Right ventricle myocardium superior (tissue), 1 donor: ENCODE measurements at regions of chr15 and their contacts with region 1.

Region 1: DNA sequence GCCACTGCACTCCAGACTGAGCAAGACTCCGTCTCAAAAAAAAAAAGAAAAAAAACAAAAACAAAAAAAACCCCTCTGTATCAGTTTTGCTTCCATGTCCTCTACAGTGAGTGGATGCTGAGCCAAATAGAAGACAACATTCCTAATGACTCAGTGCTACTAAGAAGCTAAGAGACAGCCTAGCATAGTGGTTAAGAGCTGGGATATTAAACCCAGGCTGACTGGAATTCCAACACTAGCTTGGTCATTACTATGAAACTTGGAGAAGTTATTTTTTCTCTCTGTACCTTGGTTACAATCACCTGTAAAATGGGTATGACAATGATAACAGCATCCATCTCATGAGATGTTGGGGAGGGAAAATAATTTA is 60.9 kb upstream of the PYGO1 start:
- DNase-seq: no peak
- ATAC-seq: no peak

Region 2: DNA sequence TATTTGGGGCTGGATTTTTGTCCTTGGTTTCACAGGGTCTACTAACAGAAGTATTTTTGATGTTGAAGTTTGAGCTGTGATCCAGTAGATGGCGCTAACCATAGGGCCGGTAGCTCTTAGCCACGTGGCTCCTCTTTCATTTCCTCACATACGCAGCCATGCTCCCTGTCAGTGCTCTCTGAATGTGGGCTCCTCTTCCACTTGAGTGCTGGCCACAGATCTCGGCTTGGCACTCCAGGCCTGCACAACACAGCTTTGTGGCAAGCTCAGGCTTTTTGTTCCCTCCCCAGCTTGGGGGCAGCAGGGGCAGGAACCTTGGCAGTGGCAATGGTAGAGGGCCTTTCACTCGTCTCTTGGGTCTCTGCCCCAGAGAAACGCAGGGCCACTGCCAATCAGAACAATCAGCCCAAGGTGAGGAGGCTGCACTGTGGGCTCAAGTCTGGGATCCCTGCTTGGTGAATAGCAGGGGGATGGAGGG is 122.4 kb before region 1 on chr15:
- intact Hi-C with region 1: loop called (anchors 5 kb)
- DNase-seq: no peak
- ATAC-seq: no peak

Region 3: DNA sequence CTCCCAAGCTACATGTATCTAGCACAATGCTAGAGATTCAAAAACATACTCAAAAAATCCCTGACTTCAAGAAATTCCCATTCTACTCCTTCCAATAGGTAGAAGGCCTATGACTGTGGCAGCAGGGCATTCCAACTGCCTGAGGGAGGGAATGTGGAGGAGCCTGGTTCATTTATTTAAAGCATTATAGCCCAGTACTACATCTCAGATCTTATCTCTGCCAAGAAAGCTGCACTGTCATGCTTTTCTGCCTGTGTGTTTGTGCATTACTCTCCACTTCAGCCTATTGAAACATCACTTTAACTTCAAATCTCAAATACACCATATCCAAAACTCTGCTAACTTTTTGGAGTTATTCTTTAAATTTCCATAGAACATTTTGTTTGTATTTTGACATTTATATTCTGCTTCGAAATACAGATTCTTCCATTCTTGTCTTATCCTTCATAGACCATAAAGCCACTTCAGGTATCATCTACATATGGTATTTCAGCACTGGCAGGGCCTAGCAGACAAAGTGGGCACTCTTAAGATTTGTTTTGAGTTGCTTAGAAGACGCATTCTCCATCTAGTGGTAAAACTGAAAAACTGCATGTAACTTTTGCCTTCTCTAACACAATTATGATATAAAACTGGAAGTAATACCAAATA is 403.5 kb after region 1 on chr15:
- intact Hi-C with region 1: loop called (anchors 10 kb)
- DNase-seq: no peak
- ATAC-seq: peak; percentile 46